CD8-positive, alpha-beta T cell (primary cell): ENCODE measurements at regions of chr11 and their contacts with region 1.

Region 1: DNA sequence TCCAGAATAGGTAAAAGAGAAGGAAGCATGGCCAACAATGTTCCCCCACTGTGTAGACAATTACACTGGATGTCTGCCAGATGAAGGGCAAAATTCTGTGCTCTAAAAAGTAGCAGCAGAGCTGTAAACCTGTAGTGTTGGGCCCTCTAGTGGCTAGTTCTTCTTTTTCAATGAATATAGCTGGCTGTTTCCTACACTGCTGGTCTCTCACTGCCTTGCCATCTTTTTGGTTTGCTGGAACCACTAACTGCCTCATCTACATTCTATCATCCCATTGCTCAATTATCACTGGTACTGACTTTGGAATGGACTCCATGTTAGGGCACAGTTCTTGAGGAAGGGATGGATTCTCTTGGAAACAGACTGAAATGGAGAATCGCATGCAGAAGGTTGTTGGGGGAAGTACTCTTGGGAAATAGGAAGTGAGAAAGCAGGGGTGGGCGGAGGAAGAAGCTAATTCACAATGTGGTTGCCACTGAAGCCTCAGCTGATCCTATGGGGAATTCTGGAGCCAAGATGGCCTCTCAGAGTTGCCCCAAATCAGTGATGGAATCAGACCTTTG is 17.9 kb downstream of the KCNE3 start:
- DNase-seq: peak in 8 of 9 experiments; percentile 3 to 80 (median 40)
- ATAC-seq: peak; percentile 89
- H3K4me3 ChIP-seq: no peak overlapping the region
- H3K4me3 Mint-ChIP-seq: no peak overlapping the region
- H3K27ac ChIP-seq: no peak overlapping the region
- H3K27ac Mint-ChIP-seq: no peak overlapping the region
- H3K4me1 ChIP-seq: no peaks in the 10 kb centered on the region
- H3K4me1 Mint-ChIP-seq: peaks cover 5% of the 10 kb centered on the region
- H3K27me3 ChIP-seq: no peaks in the 10 kb centered on the region
- H3K27me3 Mint-ChIP-seq: peaks cover 14% of the 10 kb centered on the region
- CTCF ChIP-seq: peak; percentile 68

Region 2: GRCh38 chr11:74388678-74389327 is 60.6 kb before region 1 on chr11:
- CTCF ChIA-PET with region 1: interaction called, 196 read pairs
- POLR2A ChIA-PET with region 1: interaction called, 3 read pairs
- intact Hi-C with region 1: loop called (anchors 1 kb)
- DNase-seq: peak; percentile 41 to 79 (median 66)
- ATAC-seq: peak; percentile 95
- H3K4me3 ChIP-seq: no peak overlapping the region
- H3K4me3 Mint-ChIP-seq: no peak overlapping the region
- H3K27ac ChIP-seq: no peak overlapping the region
- H3K27ac Mint-ChIP-seq: no peak overlapping the region
- H3K4me1 ChIP-seq: peaks cover 3% of the 10 kb centered on the region
- H3K4me1 Mint-ChIP-seq: peaks cover 21% of the 10 kb centered on the region
- H3K27me3 ChIP-seq: no peaks in the 10 kb centered on the region
- H3K27me3 Mint-ChIP-seq: no peaks in the 10 kb centered on the region
- CTCF ChIP-seq: peak; percentile 87

Region 3: GRCh38 chr11:74418509-74418895 is 30.9 kb before region 1 on chr11:
- CTCF ChIA-PET with region 1: interaction called, 11 read pairs
- POLR2A ChIA-PET with region 1: interaction called, 3 read pairs
- intact Hi-C with region 1: no loop called
- DNase-seq: no peak
- ATAC-seq: no peak
- H3K4me3 ChIP-seq: no peak overlapping the region
- H3K4me3 Mint-ChIP-seq: no peak overlapping the region
- H3K27ac ChIP-seq: no peak overlapping the region
- H3K27ac Mint-ChIP-seq: no peak overlapping the region
- H3K4me1 ChIP-seq: peaks cover 9% of the 10 kb centered on the region
- H3K4me1 Mint-ChIP-seq: peaks cover 14% of the 10 kb centered on the region
- H3K27me3 ChIP-seq: no peaks in the 10 kb centered on the region
- H3K27me3 Mint-ChIP-seq: peaks cover 3% of the 10 kb centered on the region
- CTCF ChIP-seq: no peak

Region 4: GRCh38 chr11:74462009-74462408 is 12.6 kb after region 1 on chr11:
- CTCF ChIA-PET with region 1: interaction called, 25 read pairs
- POLR2A ChIA-PET with region 1: no interaction called
- intact Hi-C with region 1: no loop called
- DNase-seq: peak in 1 of 9 experiments; percentile 27
- ATAC-seq: no peak
- H3K4me3 ChIP-seq: no peak overlapping the region
- H3K4me3 Mint-ChIP-seq: no peak overlapping the region
- H3K27ac ChIP-seq: no peak overlapping the region
- H3K27ac Mint-ChIP-seq: no peak overlapping the region
- H3K4me1 ChIP-seq: no peaks in the 10 kb centered on the region
- H3K4me1 Mint-ChIP-seq: no peaks in the 10 kb centered on the region
- H3K27me3 ChIP-seq: peaks cover 1 to 10% of the 10 kb centered on the region in 2 experiments
- H3K27me3 Mint-ChIP-seq: peaks cover 21% of the 10 kb centered on the region
- CTCF ChIP-seq: no peak

Region 5: GRCh38 chr11:74506823-74507222 is 57.4 kb after region 1 on chr11:
- CTCF ChIA-PET with region 1: no interaction called
- POLR2A ChIA-PET with region 1: no interaction called
- intact Hi-C with region 1: no loop called
- DNase-seq: no peak
- ATAC-seq: no peak
- H3K4me3 ChIP-seq: no peak overlapping the region
- H3K4me3 Mint-ChIP-seq: no peak overlapping the region
- H3K27ac ChIP-seq: no peak overlapping the region
- H3K27ac Mint-ChIP-seq: no peak overlapping the region
- H3K4me1 ChIP-seq: no peaks in the 10 kb centered on the region
- H3K4me1 Mint-ChIP-seq: no peaks in the 10 kb centered on the region
- H3K27me3 ChIP-seq: peaks cover 0 to 4% of the 10 kb centered on the region in 2 experiments
- H3K27me3 Mint-ChIP-seq: peaks cover 2% of the 10 kb centered on the region
- CTCF ChIP-seq: no peak

Region 6: GRCh38 chr11:74726547-74727182 is 277.2 kb after region 1 on chr11:
- CTCF ChIA-PET with region 1: no interaction called
- POLR2A ChIA-PET with region 1: no interaction called
- intact Hi-C with region 1: loop called in 1 of 2 experiments (anchors 5 kb)
- DNase-seq: peak; percentile 25 to 72 (median 54)
- ATAC-seq: peak; percentile 96
- H3K4me3 ChIP-seq: no peak overlapping the region
- H3K4me3 Mint-ChIP-seq: no peak overlapping the region
- H3K27ac ChIP-seq: no peak overlapping the region
- H3K27ac Mint-ChIP-seq: no peak overlapping the region
- H3K4me1 ChIP-seq: peaks cover 3% of the 10 kb centered on the region
- H3K4me1 Mint-ChIP-seq: peaks cover 9% of the 10 kb centered on the region
- H3K27me3 ChIP-seq: peaks cover 0 to 3% of the 10 kb centered on the region in 2 experiments
- H3K27me3 Mint-ChIP-seq: peaks cover 27% of the 10 kb centered on the region
- CTCF ChIP-seq: peak; percentile 87

Region 7: GRCh38 chr11:76314741-76315090 is 1865.3 kb after region 1 on chr11:
- CTCF ChIA-PET with region 1: no interaction called
- POLR2A ChIA-PET with region 1: no interaction called
- intact Hi-C with region 1: no loop called
- DNase-seq: no peak
- ATAC-seq: no peak
- H3K4me3 ChIP-seq: no peak overlapping the region
- H3K4me3 Mint-ChIP-seq: no peak overlapping the region
- H3K27ac ChIP-seq: no peak overlapping the region
- H3K27ac Mint-ChIP-seq: no peak overlapping the region
- H3K4me1 ChIP-seq: no peaks in the 10 kb centered on the region
- H3K4me1 Mint-ChIP-seq: no peaks in the 10 kb centered on the region
- H3K27me3 ChIP-seq: no peaks in the 10 kb centered on the region
- H3K27me3 Mint-ChIP-seq: peaks cover 5% of the 10 kb centered on the region
- CTCF ChIP-seq: no peak